Esophagus squamous epithelium (tissue), 5 donors: ENCODE measurements at regions of chr5 and their contacts with region 1.

Region 1: GRCh38 chr5:141960449-141961202 is 2.6 kb upstream of the PCDH12 start:
- DNase-seq: peak; percentile 58
- H3K4me3 ChIP-seq: no peak overlapping the region
- H3K27ac ChIP-seq: peak overlapping the region in 3 of 4 donors; percentile 20 to 45 (median 38)
- H3K4me1 ChIP-seq: peaks cover 14 to 41% (median 17%) of the 10 kb centered on the region in 3 donors
- H3K27me3 ChIP-seq: no peaks in the 10 kb centered on the region
- CTCF ChIP-seq: peak; percentile 84 to 95 (median 90)
- POLR2A ChIP-seq: peak in 1 of 4 donors; percentile 11

Region 2: DNA sequence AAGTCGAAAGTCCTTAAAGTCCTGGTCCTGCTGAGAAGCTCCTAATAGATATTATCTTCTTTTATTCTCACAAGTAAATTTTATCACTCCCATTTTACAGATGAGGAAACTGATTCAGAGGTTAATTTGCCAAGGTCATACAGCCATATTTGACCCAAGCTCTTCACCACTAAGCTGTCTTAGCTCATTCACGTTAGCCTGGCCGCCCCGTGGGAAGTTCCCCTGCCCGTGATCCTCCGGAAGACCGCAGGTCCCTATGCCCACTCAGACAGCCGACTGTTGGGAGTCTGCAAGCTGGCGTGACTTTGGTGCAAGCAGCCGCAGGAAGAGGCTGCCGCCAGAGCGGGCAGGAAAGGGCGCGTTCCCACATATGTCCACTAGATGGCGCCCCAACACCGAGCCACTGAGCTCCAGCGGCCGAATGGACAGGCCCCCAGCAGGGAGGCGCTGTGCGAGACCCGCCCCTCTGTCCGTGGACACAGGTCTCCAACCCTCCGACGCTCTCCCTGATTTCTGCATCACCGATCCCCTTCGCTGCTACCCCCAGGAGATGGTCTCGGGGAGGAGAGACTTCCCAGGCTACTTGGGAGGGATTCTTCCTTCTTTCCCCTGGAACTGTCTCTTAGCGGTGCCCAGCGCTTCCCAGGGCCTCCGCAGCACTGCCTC is 268.6 kb before region 1 on chr5:
- intact Hi-C with region 1: loop called (anchors 5 kb)
- DNase-seq: no peak
- H3K4me3 ChIP-seq: peak overlapping the region; percentile 14 to 58 (median 32)
- H3K27ac ChIP-seq: no peak overlapping the region
- H3K4me1 ChIP-seq: peaks cover 6 to 19% (median 6%) of the 10 kb centered on the region in 3 donors
- H3K27me3 ChIP-seq: peaks cover 0 to 38% (median 0%) of the 10 kb centered on the region in 4 donors
- CTCF ChIP-seq: peak; percentile 95 to 100 (median 99)
- POLR2A ChIP-seq: no peak